GM13976 (cell line): ENCODE measurements at regions of chr15 and their contacts with region 1.

Region 1: DNA sequence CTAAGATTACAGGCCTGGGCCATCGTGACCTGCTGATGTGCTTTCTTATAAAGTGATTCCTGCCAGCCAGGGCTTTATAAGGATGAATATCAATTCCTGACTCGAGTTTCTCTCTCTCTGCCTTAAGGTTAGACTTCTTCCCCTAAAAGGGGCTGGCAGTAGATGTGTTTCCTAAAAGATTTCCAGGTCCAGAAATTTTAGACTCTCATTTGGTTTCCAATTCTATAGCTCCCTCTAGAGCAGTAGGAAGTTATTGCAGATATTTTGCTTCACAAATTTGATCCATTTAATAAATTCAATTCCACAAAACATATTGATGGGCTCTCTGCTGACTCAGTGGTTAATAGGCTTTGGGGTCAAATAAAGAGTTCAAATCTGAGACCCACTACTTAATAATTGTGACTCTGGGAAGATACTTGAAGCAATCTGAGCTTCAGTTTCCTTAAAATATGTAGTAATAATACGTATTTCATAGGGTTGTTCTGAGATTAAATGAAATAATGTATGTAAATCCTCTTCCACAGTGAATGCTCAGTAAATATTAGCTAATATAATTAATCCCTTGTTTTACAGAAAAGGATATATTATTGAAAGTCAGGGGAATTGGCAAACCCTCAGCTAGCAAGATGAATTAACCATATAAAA is 2.1 kb downstream of the TRIM69 start:
- DNase-seq: peak; percentile 58
- CTCF ChIP-seq: peak; percentile 41

Region 2: DNA sequence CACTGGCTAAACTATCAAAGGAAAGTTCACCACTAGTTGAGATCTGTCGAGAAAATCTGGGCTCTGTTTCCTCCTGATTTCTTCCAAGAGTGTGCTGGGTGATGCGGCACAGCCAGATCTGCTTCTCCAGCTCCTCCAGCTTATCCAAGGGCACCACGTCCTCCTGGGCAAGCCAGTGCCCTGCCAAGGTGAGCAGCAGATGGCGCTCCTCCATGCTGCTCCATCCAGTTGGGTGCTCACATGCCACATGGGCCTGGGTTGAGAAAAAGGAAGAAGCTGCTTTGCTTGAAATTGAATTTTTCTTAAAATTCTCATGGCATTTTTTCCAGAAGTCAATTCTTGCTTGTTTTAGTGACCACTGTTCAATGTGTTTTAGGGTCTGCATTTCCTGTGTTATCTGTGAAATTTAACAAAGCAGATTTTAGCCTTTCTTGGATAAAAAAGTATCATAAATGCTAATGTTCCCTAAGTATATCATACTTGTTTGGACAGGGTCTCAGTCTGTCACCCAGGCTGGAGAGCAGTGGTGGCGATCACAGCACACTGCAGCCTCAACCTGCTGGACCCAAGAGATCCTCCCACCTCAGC is 154.2 kb before region 1 on chr15:
- in situ Hi-C with region 1: loop called (anchors 10 kb)
- DNase-seq: no peak
- CTCF ChIP-seq: peak; percentile 46